HCT116 (cell line): ENCODE measurements at regions of chr16 and their contacts with region 1.

Region 1: GRCh38 chr16:96935-97381 is 18.9 kb downstream of the MPG start:
- DNase-seq: peak; percentile 41
- ATAC-seq: peak; percentile 88
- H3K4me3 ChIP-seq: no peak overlapping the region
- H3K27ac ChIP-seq: no peak overlapping the region
- H3K4me1 ChIP-seq: no peaks in the 10 kb centered on the region
- H3K27me3 ChIP-seq: no peaks in the 10 kb centered on the region
- CTCF ChIP-seq: peak; percentile 80 to 99 (median 81)
- POLR2A ChIP-seq: no peak
- RAD21 ChIP-seq: peak; percentile 78

Region 2: GRCh38 chr16:53346-54236 is 43.4 kb before region 1 on chr16 and contains the starts of genes POLR3K and SNRNP25:
- CTCF ChIA-PET with region 1: no interaction called
- POLR2A ChIA-PET with region 1: no interaction called
- RAD21 ChIA-PET with region 1: no interaction called
- intact Hi-C with region 1: no loop called
- DNase-seq: peak; percentile 73
- ATAC-seq: peak; percentile 94
- H3K4me3 ChIP-seq: peak within 1 kb of the TSS; percentile 73
- H3K27ac ChIP-seq: peak within 1 kb of the TSS; percentile 84
- H3K4me1 ChIP-seq: no peaks in the 10 kb centered on the region
- H3K27me3 ChIP-seq: no peaks in the 10 kb centered on the region
- CTCF ChIP-seq: no peak
- POLR2A ChIP-seq: peak; percentile 59
- RAD21 ChIP-seq: no peak
- total RNA-seq, gene POLR3K: 22.7 TPM
- total RNA-seq, gene SNRNP25: 24.5 TPM

Region 3: GRCh38 chr16:65671-66137 is 31.3 kb before region 1 on chr16:
- CTCF ChIA-PET with region 1: interaction called, 29 read pairs
- POLR2A ChIA-PET with region 1: interaction called, 3 read pairs
- RAD21 ChIA-PET with region 1: interaction called in 1 of 2 experiments, 3 read pairs
- intact Hi-C with region 1: loop called (anchors 1 kb)
- DNase-seq: peak; percentile 21
- ATAC-seq: peak; percentile 92
- H3K4me3 ChIP-seq: no peak overlapping the region
- H3K27ac ChIP-seq: no peak overlapping the region
- H3K4me1 ChIP-seq: peaks cover 3 to 12% of the 10 kb centered on the region in 2 experiments; a peak in 3 of 4 replicates
- H3K27me3 ChIP-seq: no peaks in the 10 kb centered on the region
- CTCF ChIP-seq: peak; percentile 74 to 95 (median 76)
- POLR2A ChIP-seq: no peak
- RAD21 ChIP-seq: peak; percentile 93

Region 4: GRCh38 chr16:361872-362701 is 265.1 kb after region 1 on chr16:
- CTCF ChIA-PET with region 1: interaction called, 12 read pairs
- POLR2A ChIA-PET with region 1: no interaction called
- RAD21 ChIA-PET with region 1: no interaction called
- intact Hi-C with region 1: no loop called
- DNase-seq: peak; percentile 43
- ATAC-seq: peak; percentile 94
- H3K4me3 ChIP-seq: no peak overlapping the region
- H3K27ac ChIP-seq: peak overlapping the region; percentile 22; the same call in 1 of the 2 replicates
- H3K4me1 ChIP-seq: no peaks in the 10 kb centered on the region
- H3K27me3 ChIP-seq: no peaks in the 10 kb centered on the region
- CTCF ChIP-seq: peak; percentile 64 to 73 (median 64); a peak in 5 of 6 replicates
- POLR2A ChIP-seq: no peak
- RAD21 ChIP-seq: peak; percentile 93